ENCODE measurements at regions of chr10 and their contacts with region 1.

Region 1: DNA sequence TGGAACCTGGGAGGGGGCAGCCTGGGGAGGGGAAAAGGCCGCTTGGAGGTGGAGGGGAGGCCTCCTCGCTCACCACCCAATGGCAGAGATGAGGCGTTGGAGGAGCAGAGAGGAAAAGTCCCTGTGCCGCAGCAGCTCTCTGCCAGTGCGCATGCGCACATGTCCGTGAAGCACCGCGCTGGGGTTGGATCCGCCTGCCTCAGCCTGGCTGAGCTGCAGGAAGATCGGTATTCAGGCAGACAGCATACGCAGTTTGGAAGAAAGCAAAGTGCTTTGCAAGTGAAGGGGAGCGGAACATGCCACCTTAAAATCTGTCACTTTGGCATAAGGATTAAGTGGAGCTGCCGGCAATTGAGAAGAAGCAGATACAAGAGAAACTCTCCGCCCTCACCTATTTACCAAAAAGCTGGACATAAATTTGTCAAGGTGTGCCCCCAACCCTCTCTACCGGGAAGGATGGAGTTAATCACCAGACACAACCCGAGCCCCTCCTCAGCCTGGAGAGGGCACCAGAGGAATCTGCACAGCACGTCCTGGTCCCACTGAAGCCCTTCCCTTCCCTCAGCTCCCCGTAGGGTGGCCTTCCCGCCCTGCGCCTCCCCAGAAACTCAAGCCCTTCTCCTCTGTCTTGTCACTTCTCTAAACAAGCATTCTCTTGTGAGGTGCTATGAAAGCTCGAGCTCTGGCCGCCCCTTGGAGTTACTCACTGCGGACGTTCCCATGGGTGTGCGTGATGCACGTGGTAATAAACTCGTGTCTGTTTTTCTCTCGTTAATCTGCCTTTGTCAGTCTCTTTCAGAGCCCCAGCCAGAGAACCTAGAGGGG is 32.2 kb upstream of the TMEM72 start:
- DNase-seq: peak; percentile 77
- ATAC-seq: peak; percentile 94
- H3K4me3 Mint-ChIP-seq: peak overlapping the region; percentile 76
- H3K27ac Mint-ChIP-seq: peak overlapping the region; percentile 30
- H3K4me1 Mint-ChIP-seq: peaks cover 7% of the 10 kb centered on the region
- H3K27me3 Mint-ChIP-seq: peaks cover 26% of the 10 kb centered on the region
- CTCF ChIP-seq: no peak

Region 2: DNA sequence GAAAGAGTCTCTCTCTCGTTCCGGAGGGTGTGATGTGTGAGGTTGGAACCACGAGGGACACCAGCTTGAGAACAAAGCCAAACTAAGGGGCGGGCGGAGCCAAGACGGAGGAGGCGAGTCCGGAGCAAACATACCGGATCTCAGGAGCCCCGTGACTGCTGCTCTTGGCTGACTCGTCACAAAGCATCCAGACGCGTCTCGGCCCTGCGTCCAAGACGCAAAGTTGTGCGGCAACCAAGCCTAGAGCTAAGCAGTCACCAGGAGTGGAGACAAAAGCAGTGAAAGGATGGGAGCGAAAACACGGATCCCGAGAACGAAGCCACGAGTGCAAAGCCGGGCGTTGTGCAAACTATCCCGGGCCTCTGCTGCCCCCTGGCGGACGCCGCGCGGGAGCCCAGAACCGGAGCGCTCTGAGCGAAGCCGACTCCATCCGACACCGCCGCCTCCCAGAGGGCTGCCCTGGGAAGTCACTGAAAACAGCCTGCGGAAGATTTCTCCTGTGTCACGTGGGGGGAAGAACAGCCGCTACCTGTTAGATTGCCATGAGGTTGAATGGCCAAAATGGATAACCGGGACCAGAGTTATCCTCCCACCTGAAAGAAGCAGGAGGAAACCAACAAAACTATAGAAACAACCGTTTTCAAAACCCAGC is 14.2 kb before region 1 on chr10:
- CTCF ChIA-PET with region 1: interaction called, 12 read pairs
- POLR2A ChIA-PET with region 1: no interaction called
- intact Hi-C with region 1: no loop called
- DNase-seq: peak; percentile 86
- ATAC-seq: peak; percentile 87
- H3K4me3 Mint-ChIP-seq: peak overlapping the region; percentile 80
- H3K27ac Mint-ChIP-seq: no peak overlapping the region
- H3K4me1 Mint-ChIP-seq: no peaks in the 10 kb centered on the region
- H3K27me3 Mint-ChIP-seq: peaks cover 40% of the 10 kb centered on the region
- CTCF ChIP-seq: peak; percentile 89

Region 3: GRCh38 chr10:44890696-44891563 is 12.0 kb after region 1 on chr10:
- CTCF ChIA-PET with region 1: no interaction called
- POLR2A ChIA-PET with region 1: no interaction called
- intact Hi-C with region 1: no loop called
- DNase-seq: no peak
- ATAC-seq: no peak
- H3K4me3 Mint-ChIP-seq: no peak overlapping the region
- H3K27ac Mint-ChIP-seq: no peak overlapping the region
- H3K4me1 Mint-ChIP-seq: no peaks in the 10 kb centered on the region
- H3K27me3 Mint-ChIP-seq: no peaks in the 10 kb centered on the region
- CTCF ChIP-seq: no peak

Region 4: DNA sequence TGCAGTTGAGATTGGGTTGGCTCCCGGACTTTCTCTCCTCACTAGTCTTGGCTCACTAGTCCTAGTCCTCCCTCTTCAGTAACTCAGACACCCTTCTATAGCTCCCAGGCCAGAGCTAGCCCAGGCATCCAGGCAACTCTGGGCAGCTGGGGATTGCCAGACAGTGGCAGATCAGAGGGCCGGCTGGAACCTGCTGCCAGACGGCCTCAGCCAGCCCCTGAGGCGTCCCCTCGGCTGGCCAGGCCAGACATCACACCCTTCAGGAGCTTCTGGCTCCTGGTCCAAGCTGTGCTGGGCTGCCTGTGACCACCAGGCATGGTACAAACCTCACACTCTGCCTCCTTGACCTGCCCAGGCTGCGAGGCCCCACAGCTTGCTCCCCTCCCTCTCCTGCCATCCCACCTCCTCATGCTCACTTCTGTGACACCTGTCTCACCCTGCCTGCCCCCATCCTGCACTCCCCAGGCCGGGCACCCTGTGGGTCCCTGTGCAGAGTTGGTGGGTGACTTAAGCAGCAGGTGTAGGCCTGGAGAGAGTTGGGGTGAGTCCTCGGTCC is 93.9 kb after region 1 on chr10:
- CTCF ChIA-PET with region 1: no interaction called
- POLR2A ChIA-PET with region 1: no interaction called
- intact Hi-C with region 1: no loop called
- DNase-seq: no peak
- ATAC-seq: no peak
- H3K4me3 Mint-ChIP-seq: no peak overlapping the region
- H3K27ac Mint-ChIP-seq: no peak overlapping the region
- H3K4me1 Mint-ChIP-seq: peaks cover 35% of the 10 kb centered on the region
- H3K27me3 Mint-ChIP-seq: no peaks in the 10 kb centered on the region
- CTCF ChIP-seq: no peak

Region 5: DNA sequence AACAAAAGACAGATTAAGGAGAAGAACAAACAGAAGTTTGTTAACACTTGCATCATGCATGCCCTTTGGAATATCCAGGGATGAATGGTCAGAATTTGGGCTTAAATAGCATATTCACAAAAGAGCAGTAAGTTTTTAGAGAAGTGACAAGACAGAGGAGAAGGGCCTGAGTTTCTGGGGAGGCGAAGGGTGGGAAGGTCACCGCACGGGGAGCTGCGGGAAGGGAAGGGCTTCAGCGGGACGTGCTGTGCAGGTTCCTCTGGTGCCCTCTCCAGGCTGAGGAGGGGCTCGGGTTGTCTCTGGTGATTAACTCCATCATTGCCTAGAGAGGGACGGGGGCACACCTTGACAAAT is 111.4 kb after region 1 on chr10:
- CTCF ChIA-PET with region 1: no interaction called
- POLR2A ChIA-PET with region 1: no interaction called
- intact Hi-C with region 1: no loop called
- DNase-seq: no peak
- ATAC-seq: no peak
- H3K4me3 Mint-ChIP-seq: no peak overlapping the region
- H3K27ac Mint-ChIP-seq: no peak overlapping the region
- H3K4me1 Mint-ChIP-seq: peaks cover 10% of the 10 kb centered on the region
- H3K27me3 Mint-ChIP-seq: peaks cover 3% of the 10 kb centered on the region
- CTCF ChIP-seq: no peak

Measured in activated CD8-positive, alpha-beta T cell treated with anti-CD3 and anti-CD28 coated beads for 36 hours (primary cell).